CD8-positive, alpha-beta memory T cell (primary cell): ENCODE measurements at regions of chr15 and their contacts with region 1.

Region 1: DNA sequence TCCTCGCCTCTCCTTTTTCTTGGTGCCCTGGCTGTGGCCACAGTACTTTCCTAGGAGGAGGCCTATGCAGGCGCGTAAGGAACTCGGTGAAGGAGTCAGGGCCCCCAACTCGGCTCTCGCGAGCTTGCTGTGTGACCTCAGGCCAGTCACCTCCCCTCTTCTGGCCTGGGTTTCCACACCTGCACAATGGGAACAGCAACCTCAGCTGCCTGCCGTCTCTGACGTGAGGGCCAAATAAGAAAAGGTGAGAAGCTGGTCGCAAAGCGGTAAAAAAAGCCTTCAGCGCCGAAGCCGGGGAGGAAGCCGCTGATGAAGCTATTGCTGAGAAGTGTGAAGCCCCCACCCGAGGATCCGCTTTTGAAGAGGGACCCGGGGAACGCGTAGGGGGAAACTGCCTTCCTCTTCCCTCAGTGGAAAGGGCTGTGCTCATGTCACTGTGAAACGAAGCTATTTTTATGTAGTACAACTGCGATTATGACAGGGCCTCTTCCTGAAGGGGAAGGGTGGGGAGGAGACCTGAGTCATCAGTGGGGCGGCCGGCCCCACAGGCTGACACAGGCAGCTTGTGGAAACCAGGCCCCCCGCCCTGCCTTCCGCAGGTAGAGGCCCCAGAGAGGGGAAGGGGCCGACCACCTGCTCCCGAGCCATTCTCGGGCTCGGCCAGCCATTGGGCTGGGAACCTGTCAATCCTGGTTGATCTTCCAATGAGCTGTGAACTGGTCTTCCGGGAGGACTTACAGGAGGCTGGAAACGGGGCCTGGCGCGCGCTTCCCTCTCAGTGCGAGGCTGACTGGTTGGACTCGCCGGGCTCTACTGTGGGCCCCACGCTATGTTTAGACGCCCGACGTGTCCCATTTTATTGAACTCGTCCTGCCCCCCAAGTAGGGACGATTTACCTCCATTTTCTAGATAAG is 18.0 kb upstream of the ANKDD1A start:
- DNase-seq: peak; percentile 84 to 98 (median 92)
- H3K4me3 ChIP-seq: peak overlapping the region; percentile 75
- H3K4me3 Mint-ChIP-seq: peak overlapping the region; percentile 78 to 94 (median 87)
- H3K27ac ChIP-seq: peak overlapping the region; percentile 86
- H3K27ac Mint-ChIP-seq: peak overlapping the region; percentile 95 to 99 (median 98)
- H3K4me1 ChIP-seq: peaks cover 62% of the 10 kb centered on the region
- H3K4me1 Mint-ChIP-seq: peaks cover 66 to 76% (median 71%) of the 10 kb centered on the region in 3 donors
- H3K27me3 ChIP-seq: no peaks in the 10 kb centered on the region
- H3K27me3 Mint-ChIP-seq: no peaks in the 10 kb centered on the region

Region 2: GRCh38 chr15:64731012-64731806 is 162.5 kb before region 1 on chr15:
- CTCF ChIA-PET with region 1: interaction called, 11 read pairs
- POLR2A ChIA-PET with region 1: no interaction called
- DNase-seq: peak; percentile 74 to 86 (median 78)
- H3K4me3 ChIP-seq: no peak overlapping the region
- H3K4me3 Mint-ChIP-seq: no peak overlapping the region
- H3K27ac ChIP-seq: no peak overlapping the region
- H3K27ac Mint-ChIP-seq: peak overlapping the region in 1 of 8 donors; percentile 64
- H3K4me1 ChIP-seq: peaks cover 7% of the 10 kb centered on the region
- H3K4me1 Mint-ChIP-seq: peaks cover 7 to 10% (median 9%) of the 10 kb centered on the region in 3 donors
- H3K27me3 ChIP-seq: no peaks in the 10 kb centered on the region
- H3K27me3 Mint-ChIP-seq: peaks cover 4 to 5% of the 10 kb centered on the region in 2 donors

Region 3: GRCh38 chr15:64825431-64826294 is 68.1 kb before region 1 on chr15 and contains the start of gene PIF1:
- CTCF ChIA-PET with region 1: interaction called, 5 read pairs
- POLR2A ChIA-PET with region 1: interaction called, 12 read pairs
- DNase-seq: peak; percentile 80 to 91 (median 88)
- H3K4me3 ChIP-seq: peak within 1 kb of the TSS; percentile 85
- H3K4me3 Mint-ChIP-seq: peak within 1 kb of the TSS; percentile 79 to 92 (median 89)
- H3K27ac ChIP-seq: peak within 1 kb of the TSS; percentile 51
- H3K27ac Mint-ChIP-seq: peak within 1 kb of the TSS; percentile 19 to 97 (median 82)
- H3K4me1 ChIP-seq: peaks cover 26% of the 10 kb centered on the region
- H3K4me1 Mint-ChIP-seq: peaks cover 27 to 34% (median 33%) of the 10 kb centered on the region in 3 donors
- H3K27me3 ChIP-seq: no peaks in the 10 kb centered on the region
- H3K27me3 Mint-ChIP-seq: peaks cover 0 to 10% of the 10 kb centered on the region in 2 donors
- total RNA-seq, gene PIF1: 14.6 to 14.7 TPM

Region 4: GRCh38 chr15:64841258-64842095 is 52.3 kb before region 1 on chr15 and contains the start of gene PLEKHO2:
- CTCF ChIA-PET with region 1: interaction called, 62 read pairs
- POLR2A ChIA-PET with region 1: interaction called, 30 read pairs
- DNase-seq: peak; percentile 82 to 95 (median 90)
- H3K4me3 ChIP-seq: peak within 1 kb of the TSS; percentile 93
- H3K4me3 Mint-ChIP-seq: peak within 1 kb of the TSS; percentile 77 to 99 (median 97)
- H3K27ac ChIP-seq: peak within 1 kb of the TSS; percentile 77
- H3K27ac Mint-ChIP-seq: peak within 1 kb of the TSS; percentile 86 to 99 (median 96)
- H3K4me1 ChIP-seq: peaks cover 79% of the 10 kb centered on the region
- H3K4me1 Mint-ChIP-seq: peaks cover 72 to 85% (median 85%) of the 10 kb centered on the region in 3 donors
- H3K27me3 ChIP-seq: no peaks in the 10 kb centered on the region
- H3K27me3 Mint-ChIP-seq: peaks cover 0 to 1% of the 10 kb centered on the region in 2 donors
- total RNA-seq, gene PLEKHO2: 15.8 to 16.1 TPM

Region 5: GRCh38 chr15:65146438-65146837 is 252.7 kb after region 1 on chr15:
- CTCF ChIA-PET with region 1: no interaction called
- POLR2A ChIA-PET with region 1: interaction called, 10 read pairs
- DNase-seq: no peak
- H3K4me3 ChIP-seq: no peak overlapping the region
- H3K4me3 Mint-ChIP-seq: no peak overlapping the region
- H3K27ac ChIP-seq: no peak overlapping the region
- H3K27ac Mint-ChIP-seq: no peak overlapping the region
- H3K4me1 ChIP-seq: no peaks in the 10 kb centered on the region
- H3K4me1 Mint-ChIP-seq: no peaks in the 10 kb centered on the region
- H3K27me3 ChIP-seq: no peaks in the 10 kb centered on the region
- H3K27me3 Mint-ChIP-seq: no peaks in the 10 kb centered on the region